ENCODE measurements at regions of chr1 and their contacts with region 1.

Region 1: GRCh38 chr1:2412519-2413233 is at the start of gene PEX10:
- DNase-seq: peak; percentile 96 to 100 (median 98)
- ATAC-seq: peak; percentile 96
- H3K4me3 ChIP-seq: peak within 1 kb of the TSS; percentile 75 to 99
- H3K27ac ChIP-seq: peak within 1 kb of the TSS; percentile 82 to 88
- H3K4me1 ChIP-seq: peaks cover 16 to 27% of the 10 kb centered on the region in 2 donors
- H3K27me3 ChIP-seq: peaks cover 0 to 32% of the 10 kb centered on the region in 2 donors
- CTCF ChIP-seq: no peak
- polyA plus RNA-seq, gene PEX10: 15.5 to 22.9 (median 19.2) TPM

Region 2: GRCh38 chr1:2279210-2279639 is 133.5 kb before region 1 on chr1:
- intact Hi-C with region 1: no loop called
- DNase-seq: peak; percentile 75 to 99 (median 92)
- ATAC-seq: peak; percentile 54
- H3K4me3 ChIP-seq: no peak overlapping the region
- H3K27ac ChIP-seq: peak overlapping the region; percentile 70 to 81
- H3K4me1 ChIP-seq: peaks cover 57 to 61% of the 10 kb centered on the region in 2 donors
- H3K27me3 ChIP-seq: no peaks in the 10 kb centered on the region
- CTCF ChIP-seq: no peak

Region 3: DNA sequence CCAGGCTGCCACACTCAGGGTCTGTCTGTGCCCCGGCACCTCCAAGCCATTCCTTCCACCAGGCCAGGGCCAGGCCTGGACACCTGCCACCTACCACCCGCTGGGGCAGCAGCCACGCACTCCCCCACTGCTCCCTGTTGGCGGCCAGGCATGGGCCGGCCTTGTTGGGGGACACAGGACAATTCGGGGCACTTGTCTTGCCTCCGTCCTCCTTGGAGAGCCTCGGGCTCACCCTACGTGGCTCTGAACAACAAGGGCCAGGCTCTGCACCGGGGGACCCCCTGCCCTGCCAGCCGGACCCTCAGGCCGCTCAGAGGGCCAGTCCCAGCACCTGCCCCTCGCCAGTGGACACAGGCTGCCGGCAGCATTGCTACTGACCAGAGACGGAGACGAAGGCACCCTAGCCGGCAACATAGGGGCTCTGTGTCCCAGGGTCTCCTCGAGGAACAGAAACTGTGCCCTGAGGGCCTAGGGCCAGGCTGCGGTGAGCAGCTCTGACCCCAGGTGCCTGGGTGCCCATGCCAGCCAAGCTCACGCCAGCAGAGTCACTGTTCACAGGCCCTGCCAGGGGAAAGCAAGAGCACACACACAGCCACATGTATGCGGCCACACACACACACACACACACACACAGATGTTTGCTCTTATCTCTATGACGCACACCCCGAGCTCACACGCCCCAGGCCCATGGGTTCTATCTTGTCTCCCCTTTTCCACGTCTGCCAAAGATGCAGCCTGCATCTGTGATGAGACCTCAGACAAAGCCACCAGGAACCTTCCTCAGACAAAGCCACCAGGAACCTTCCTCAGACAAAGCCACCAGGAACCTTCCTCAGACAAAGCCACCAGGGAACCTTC is 67.2 kb before region 1 on chr1:
- intact Hi-C with region 1: no loop called
- DNase-seq: peak in 2 of 4 donors; percentile 21 to 70
- ATAC-seq: no peak
- H3K4me3 ChIP-seq: no peak overlapping the region
- H3K27ac ChIP-seq: no peak overlapping the region
- H3K4me1 ChIP-seq: no peaks in the 10 kb centered on the region
- H3K27me3 ChIP-seq: no peaks in the 10 kb centered on the region
- CTCF ChIP-seq: no peak

Region 4: DNA sequence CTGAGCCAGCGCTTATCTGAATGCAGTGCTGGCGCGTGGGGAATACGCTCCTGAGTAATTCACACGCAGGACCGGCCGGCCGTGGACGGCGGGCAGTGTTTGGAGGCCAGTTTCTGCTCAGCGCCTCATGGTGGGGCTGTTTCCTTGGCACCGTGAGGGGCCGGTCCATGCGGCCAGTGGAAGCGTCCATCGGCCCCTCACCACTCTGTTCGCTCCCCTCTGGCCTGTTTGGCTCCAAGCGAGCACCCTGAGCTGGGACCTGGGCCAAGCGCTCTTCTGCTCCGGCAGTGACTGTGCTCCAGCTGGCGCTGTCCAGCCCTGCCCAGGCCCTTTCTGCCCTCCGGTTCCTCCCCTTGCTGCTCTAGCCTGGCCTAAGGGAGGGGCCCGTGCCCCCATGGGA is 47.1 kb after region 1 on chr1:
- intact Hi-C with region 1: no loop called
- DNase-seq: peak in 2 of 4 donors; percentile 66 to 84
- ATAC-seq: no peak
- H3K4me3 ChIP-seq: no peak overlapping the region
- H3K27ac ChIP-seq: no peak overlapping the region
- H3K4me1 ChIP-seq: peaks cover 0 to 5% of the 10 kb centered on the region in 2 donors
- H3K27me3 ChIP-seq: peaks cover 0 to 83% of the 10 kb centered on the region in 2 donors
- CTCF ChIP-seq: no peak

Region 5: DNA sequence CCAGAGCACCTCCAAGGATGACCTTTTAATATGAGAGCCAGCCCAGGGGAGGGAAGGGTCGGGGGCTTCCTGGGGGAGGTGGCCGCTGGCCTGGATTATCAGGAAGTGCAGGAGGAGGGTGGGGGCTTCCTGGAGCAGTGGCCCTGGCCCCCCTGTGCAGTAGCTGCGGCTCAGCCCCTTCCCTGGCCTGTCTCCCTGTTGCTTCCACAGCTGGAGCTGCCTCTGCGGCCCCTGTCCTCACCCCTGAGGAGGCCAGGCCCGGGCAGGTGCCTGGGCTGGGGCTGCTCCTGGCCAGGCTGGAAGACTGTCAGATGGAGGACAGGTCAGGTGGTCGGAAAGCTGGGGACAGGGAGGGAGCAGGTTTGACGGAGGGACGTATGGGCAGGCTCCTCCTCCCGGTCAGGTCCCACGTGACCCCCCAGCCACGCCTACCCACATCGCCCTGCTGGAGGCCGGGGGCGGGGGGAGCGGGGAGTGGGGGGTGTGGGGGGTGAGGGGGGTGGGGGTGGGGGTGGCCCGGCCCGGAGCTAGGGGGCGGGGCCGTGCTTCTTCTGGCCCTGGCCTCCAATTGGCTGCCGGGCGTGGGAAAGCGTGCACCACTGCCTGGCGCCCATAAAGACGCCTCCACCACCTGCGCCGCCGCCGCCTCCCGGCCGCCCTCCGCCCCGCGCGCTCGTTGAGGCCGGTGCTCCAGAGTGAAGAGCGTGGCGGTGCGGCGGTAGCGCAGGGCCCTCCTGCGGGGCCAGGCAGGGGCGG is 133.3 kb after region 1 on chr1:
- intact Hi-C with region 1: loop called in 1 of 2 experiments (anchors 10 kb)
- DNase-seq: peak in 3 of 4 donors; percentile 86 to 98 (median 95)
- ATAC-seq: peak; percentile 72
- H3K4me3 ChIP-seq: peak overlapping the region; percentile 55 to 61
- H3K27ac ChIP-seq: peak overlapping the region; percentile 97
- H3K4me1 ChIP-seq: peaks cover 31 to 74% of the 10 kb centered on the region in 2 donors
- H3K27me3 ChIP-seq: peaks cover 3 to 11% of the 10 kb centered on the region in 2 donors
- CTCF ChIP-seq: no peak

Region 6: DNA sequence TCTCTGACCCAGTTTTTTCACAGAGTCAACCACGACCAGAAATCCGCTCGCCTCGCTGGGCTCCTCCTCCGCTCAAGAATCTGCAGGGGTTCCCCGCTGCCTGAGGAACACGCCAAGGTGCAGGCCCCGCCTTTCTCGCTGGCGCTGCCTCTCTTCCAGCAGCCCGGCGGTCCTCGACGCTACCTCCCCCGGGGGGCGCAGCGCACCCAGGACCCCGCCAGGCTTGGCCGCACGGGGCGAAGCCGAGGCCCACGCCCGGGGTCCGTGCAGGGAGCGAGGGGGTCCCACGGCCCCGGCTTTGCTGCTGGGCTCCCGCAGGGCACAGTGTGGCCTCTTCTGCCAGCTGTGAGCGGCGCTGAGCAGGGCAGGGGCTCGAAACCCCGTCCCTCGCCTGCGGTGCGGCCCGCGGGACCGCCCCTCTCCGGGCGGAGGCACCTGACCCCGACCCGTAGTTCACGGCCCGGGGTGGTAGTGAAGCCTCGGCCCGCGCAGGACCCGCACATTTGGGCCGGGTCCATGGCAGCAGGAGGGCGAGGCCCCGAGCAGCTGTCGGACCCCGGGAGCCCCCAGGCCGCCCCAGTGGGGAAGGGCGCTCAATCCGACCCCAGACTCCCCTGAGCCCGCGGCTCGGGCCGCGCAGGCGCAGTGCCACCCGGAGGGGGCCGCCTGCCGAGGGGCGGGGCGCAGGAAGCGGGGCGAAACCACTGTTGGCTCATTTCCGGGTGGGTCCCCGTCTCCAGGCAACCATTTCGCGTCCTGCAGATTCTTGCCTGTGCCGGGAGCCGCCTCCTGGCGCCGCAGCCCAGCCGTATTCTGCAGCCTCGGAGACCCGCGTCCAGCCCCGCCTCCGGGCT is 230.1 kb after region 1 on chr1:
- intact Hi-C with region 1: loop called in 1 of 2 experiments (anchors 10 kb)
- DNase-seq: peak; percentile 91 to 97 (median 93)
- ATAC-seq: peak; percentile 93
- H3K4me3 ChIP-seq: peak overlapping the region; percentile 73 to 83
- H3K27ac ChIP-seq: peak overlapping the region; percentile 76 to 83
- H3K4me1 ChIP-seq: peaks cover 7 to 19% of the 10 kb centered on the region in 2 donors
- H3K27me3 ChIP-seq: peaks cover 0 to 6% of the 10 kb centered on the region in 2 donors
- CTCF ChIP-seq: no peak

Region 7: DNA sequence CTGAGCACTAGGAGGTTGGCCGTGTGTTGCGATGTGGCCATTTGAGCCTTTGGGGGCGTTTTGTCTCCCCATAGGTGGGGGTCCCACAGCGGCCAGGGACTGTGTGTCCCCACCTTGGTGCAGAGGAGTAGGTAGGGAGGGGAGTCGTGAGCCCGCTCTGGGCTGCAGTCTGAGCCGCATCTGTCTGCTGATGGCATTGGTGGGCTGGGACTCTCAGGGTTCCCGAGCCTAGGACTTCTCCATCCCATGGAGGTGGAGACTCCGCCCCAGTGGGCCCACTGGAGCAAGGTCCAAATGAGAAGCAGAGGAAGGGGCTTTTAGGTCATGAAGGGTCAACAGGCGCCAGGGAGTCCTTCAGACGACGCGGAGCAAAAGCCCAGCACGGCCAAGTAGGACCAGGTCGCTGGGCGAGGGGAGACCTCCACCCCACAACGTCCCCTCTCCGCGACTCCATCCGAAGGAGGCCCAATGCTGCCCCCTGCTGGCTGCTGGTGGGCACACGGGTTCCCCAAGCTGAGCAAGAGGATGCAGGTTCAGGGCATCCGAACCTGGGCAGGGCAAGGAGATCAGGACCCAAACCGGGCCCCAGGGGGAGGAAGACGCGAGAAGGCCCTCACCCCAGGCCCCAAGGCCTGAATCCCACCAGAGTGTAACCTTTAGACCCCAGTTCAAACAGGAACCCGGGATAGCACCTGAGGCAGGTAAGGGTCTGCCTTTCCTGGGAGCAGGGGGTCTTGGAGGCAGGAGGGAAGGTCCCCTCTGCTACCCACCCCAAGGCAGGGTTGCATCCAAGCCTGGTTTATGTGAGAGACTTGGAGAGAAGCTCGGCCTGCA is 373.9 kb after region 1 on chr1:
- intact Hi-C with region 1: loop called in 1 of 2 experiments (anchors 5 kb)
- DNase-seq: peak in 3 of 4 donors; percentile 37 to 90 (median 53)
- ATAC-seq: peak; percentile 71
- H3K4me3 ChIP-seq: no peak overlapping the region
- H3K27ac ChIP-seq: no peak overlapping the region
- H3K4me1 ChIP-seq: peaks cover 0 to 12% of the 10 kb centered on the region in 2 donors
- H3K27me3 ChIP-seq: peaks cover 36 to 75% of the 10 kb centered on the region in 2 donors
- CTCF ChIP-seq: peak; percentile 58 to 88

Region 8: DNA sequence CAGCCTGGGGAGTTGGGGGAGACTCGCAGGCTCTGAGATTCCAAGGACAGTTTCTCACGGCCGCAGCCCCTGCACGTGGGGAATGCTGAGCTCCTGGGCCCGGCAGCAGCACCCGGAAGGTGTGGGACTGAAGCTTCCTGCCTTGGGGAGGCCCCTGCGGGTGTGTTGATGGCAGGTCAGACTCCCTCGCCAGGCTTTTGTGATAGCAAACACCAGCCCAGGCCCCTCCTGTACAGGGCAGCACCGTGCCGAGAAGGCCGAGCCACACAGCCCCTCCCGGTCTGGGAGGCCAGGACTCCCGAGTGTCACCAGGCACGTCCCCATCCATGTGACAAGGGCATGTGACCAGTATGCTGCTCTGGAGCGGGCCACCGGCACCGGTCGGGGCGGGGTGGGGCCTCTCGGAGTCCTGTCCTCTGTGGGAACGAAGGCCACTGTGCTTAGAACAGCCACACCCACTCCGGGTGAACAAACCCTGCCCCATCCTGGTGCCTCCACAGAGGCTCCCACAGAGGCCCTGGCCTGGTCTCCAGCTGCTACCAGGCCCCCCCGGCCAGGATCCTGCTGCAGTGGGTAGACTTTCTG is 1010.7 kb after region 1 on chr1:
- intact Hi-C with region 1: loop called in 1 of 2 experiments (anchors 10 kb)
- DNase-seq: peak in 2 of 4 donors; percentile 40 to 75
- ATAC-seq: peak; percentile 91
- H3K4me3 ChIP-seq: no peak overlapping the region
- H3K27ac ChIP-seq: no peak overlapping the region
- H3K4me1 ChIP-seq: no peaks in the 10 kb centered on the region
- H3K27me3 ChIP-seq: peaks cover 0 to 48% of the 10 kb centered on the region in 2 donors
- CTCF ChIP-seq: no peak